GM13976 (cell line): ENCODE measurements at regions of chr17 and their contacts with region 1.

Region 1: GRCh38 chr17:8991514-8992285 is 26.2 kb upstream of the PIK3R5 start:
- DNase-seq: peak; percentile 67
- CTCF ChIP-seq: peak; percentile 43

Region 2: DNA sequence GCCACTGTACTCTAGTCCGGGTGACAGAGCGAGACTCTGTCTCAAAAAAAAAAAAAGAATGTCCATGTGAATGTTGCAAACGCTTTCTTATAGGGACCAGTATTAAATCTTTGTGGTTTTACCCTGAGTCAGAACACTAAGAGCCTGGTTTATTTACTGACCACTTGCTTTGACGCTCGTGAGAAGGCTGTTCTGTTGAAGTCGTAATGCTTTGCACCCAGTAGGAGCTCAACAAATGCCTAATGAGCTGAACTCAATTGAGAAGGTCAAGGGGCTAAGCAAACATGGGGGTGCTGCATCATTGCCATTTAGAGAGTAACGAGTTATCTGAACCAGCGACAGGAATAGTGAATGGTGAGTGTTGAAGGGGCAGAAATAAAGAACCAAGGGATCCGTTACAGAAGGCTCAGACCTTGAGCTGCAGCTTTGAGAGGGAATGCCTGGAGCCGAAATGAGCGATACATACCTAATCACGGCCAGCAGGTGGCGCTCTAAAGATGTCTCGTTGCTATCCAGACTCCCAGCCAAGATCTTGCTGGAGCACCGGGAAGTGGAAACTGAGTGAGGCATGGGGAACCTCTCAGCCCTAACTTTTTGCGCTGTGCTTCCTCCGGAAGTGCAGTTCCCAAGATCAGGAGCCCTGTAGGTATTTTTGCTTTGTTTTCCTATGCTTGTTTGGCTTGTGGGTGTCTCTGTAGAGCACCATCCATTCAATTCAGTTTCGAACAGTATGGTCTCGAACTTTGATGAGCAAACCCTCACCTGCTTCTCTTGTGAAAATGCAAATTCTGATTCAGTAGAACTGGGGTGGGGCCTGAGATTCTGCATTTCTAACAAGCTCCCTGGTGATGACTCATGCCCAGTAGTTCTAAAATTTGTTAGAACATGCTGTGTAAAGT is 581.5 kb before region 1 on chr17:
- in situ Hi-C with region 1: loop called (anchors 25 kb)
- DNase-seq: peak; percentile 77
- CTCF ChIP-seq: peak; percentile 79

Region 3: DNA sequence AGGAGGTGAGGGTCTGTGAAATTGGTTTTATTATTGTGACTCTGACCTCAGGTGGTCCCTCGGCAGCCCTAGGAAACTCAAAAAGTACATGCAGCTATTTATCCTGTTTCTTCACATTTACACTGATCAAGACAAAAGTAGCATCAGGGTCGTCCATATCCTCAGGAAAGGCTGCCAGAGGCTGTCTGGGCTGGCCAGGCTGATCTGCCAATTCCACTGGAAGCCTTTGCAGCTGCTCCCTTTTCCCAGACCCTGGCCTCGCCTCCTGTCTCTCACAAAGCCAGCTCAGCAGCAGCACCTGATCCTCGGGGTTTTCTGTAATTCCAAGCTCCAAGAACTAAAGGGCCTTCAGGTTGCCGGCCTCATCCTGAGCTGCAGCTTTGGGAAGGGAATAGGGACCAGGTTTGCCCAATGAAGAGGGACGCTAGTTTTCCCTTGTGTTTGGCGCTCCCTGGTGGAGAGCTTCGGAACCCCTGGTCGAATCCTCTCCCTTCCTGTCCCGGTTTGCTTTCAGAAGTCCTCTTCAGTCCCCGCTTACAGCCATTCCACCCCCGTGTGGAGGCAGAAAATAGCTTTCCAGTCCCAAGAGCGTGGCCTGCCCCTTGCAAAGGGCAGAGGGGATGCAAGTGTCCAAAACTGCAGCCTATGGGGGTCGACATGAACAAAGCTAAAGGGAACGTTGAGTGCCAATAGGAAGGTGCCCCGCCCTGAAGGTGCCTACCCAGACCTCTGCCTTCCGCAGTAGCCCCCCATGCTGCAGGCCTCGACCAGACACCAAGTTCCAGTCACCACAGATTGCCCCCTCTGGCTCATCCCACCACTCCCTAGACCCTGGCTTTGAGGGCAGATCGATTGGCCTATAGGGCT is 205.9 kb before region 1 on chr17:
- in situ Hi-C with region 1: loop called (anchors 10 kb)
- DNase-seq: peak; percentile 78
- CTCF ChIP-seq: peak; percentile 63